ENCODE measurements at regions of chr4 and their contacts with region 1.

Region 1: GRCh38 chr4:87848622-87849351 is 16.0 kb downstream of the MEPE start:
- ATAC-seq: peak; percentile 74 to 98 (median 82)
- H3K4me3 ChIP-seq: peak overlapping the region in 2 of 5 donors; percentile 4 to 14
- H3K27ac ChIP-seq: no peak overlapping the region
- H3K4me1 ChIP-seq: peaks cover 0 to 3% of the 10 kb centered on the region in 2 donors

Region 2: GRCh38 chr4:87270144-87270543 is 578.6 kb before region 1 on chr4:
- in situ Hi-C with region 1: loop called in 2 of 9 experiments (anchors 10 to 25 kb)
- ATAC-seq: peak in 5 of 8 experiments; percentile 48 to 92 (median 67)
- H3K4me3 ChIP-seq: no peak overlapping the region
- H3K27ac ChIP-seq: no peak overlapping the region
- H3K4me1 ChIP-seq: peaks cover 0 to 11% of the 10 kb centered on the region in 2 donors

Region 3: GRCh38 chr4:87543835-87544461 is 304.8 kb before region 1 on chr4:
- in situ Hi-C with region 1: loop called in 2 of 9 experiments (anchors 10 to 25 kb)
- ATAC-seq: peak in 5 of 8 experiments; percentile 55 to 87 (median 80)
- H3K4me3 ChIP-seq: no peak overlapping the region
- H3K27ac ChIP-seq: no peak overlapping the region
- H3K4me1 ChIP-seq: no peaks in the 10 kb centered on the region

Region 4: DNA sequence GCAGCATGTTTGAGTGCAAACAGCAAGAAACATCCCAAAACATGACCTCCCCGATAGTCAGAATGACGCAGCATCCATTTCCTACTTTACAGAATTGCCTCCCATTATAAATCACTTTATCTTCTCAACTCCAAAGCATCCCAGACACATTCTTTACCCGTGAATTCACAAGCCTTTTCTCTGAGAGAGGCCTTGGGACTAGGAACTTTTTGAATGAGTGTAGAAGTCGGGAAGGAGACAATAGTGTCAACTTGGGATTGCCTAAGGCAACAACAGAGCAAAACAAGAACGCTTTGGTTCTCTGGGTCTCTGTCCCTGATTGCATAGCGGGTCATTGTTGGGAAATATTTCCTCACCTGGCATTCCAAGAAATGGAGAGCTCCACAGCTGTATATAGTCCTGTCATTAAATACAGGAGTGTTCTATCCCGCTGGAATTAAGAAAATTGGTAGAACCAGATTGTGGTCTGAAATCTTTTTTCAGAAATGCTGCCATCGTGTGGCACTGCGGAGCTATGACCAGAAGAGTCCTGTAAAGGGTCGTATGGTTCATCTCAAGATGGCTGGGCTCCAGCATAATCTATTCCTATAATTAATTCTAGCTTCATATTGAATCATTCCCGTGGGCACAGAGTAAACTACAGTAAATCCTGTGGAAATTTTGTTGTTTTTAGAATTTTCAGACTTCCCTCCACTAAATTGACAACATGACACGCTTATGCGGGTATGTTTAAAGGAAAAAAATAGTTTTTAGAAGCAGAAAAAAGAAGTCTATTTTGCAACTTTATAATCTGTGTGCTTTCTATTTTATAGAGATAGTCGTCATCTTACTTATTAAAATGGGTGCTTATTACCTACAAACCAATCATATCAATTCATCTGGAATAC is 124.7 kb after region 1 on chr4:
- in situ Hi-C with region 1: loop called in 3 of 9 experiments (anchors 5 to 25 kb)
- ATAC-seq: peak; percentile 78 to 95 (median 84)
- H3K4me3 ChIP-seq: peak overlapping the region in 4 of 5 donors; percentile 3 to 29 (median 15)
- H3K27ac ChIP-seq: no peak overlapping the region
- H3K4me1 ChIP-seq: peaks cover 16 to 27% of the 10 kb centered on the region in 2 donors

Region 5: GRCh38 chr4:88143504-88143903 is 294.7 kb after region 1 on chr4:
- in situ Hi-C with region 1: no loop called
- ATAC-seq: no peak
- H3K4me3 ChIP-seq: no peak overlapping the region
- H3K27ac ChIP-seq: no peak overlapping the region
- H3K4me1 ChIP-seq: no peaks in the 10 kb centered on the region

Region 6: GRCh38 chr4:88158489-88159243 is 309.9 kb after region 1 on chr4 and contains the start of gene ABCG2:
- in situ Hi-C with region 1: no loop called
- ATAC-seq: peak; percentile 81 to 84 (median 83)
- H3K4me3 ChIP-seq: peak within 1 kb of the TSS; percentile 37 to 47 (median 41)
- H3K27ac ChIP-seq: no peak within 1 kb of the TSS
- H3K4me1 ChIP-seq: peaks cover 4 to 11% of the 10 kb centered on the region in 2 donors
- total RNA-seq, gene ABCG2: 0.05 to 39.6 (median 0.31) TPM